Posterior vena cava (tissue), 2 donors: ENCODE measurements at regions of chr10 and their contacts with region 1.

Region 1: GRCh38 chr10:76403912-76404311 is 972.5 kb downstream of the LRMDA start:
- DNase-seq: no peak

Region 2: GRCh38 chr10:76311752-76312636 is 91.9 kb before region 1 on chr10:
- intact Hi-C with region 1: loop called in 1 of 2 experiments (anchors 10 kb)
- DNase-seq: no peak